CD4-positive, alpha-beta T cell (primary cell): ENCODE measurements at regions of chr5 and their contacts with region 1.

Region 1: GRCh38 chr5:41270423-41271251 is 57.3 kb upstream of the C6 start:
- DNase-seq: peak in 3 of 14 experiments; percentile 1 to 9 (median 3)
- ATAC-seq: no peak
- H3K4me3 ChIP-seq: no peak overlapping the region
- H3K4me3 Mint-ChIP-seq: no peak overlapping the region
- H3K27ac ChIP-seq: no peak overlapping the region
- H3K27ac Mint-ChIP-seq: no peak overlapping the region
- H3K4me1 ChIP-seq: no peaks in the 10 kb centered on the region
- H3K4me1 Mint-ChIP-seq: no peaks in the 10 kb centered on the region
- H3K27me3 ChIP-seq: no peaks in the 10 kb centered on the region
- H3K27me3 Mint-ChIP-seq: no peaks in the 10 kb centered on the region
- CTCF ChIP-seq: no peak

Region 2: GRCh38 chr5:41843456-41844370 is 573.1 kb after region 1 on chr5:
- CTCF ChIA-PET with region 1: no interaction called
- POLR2A ChIA-PET with region 1: no interaction called
- intact Hi-C with region 1: loop called in 1 of 2 experiments (anchors 10 kb)
- DNase-seq: peak in 4 of 14 experiments; percentile 33 to 62 (median 58)
- ATAC-seq: peak; percentile 67
- H3K4me3 ChIP-seq: no peak overlapping the region
- H3K4me3 Mint-ChIP-seq: no peak overlapping the region
- H3K27ac ChIP-seq: no peak overlapping the region
- H3K27ac Mint-ChIP-seq: no peak overlapping the region
- H3K4me1 ChIP-seq: no peaks in the 10 kb centered on the region
- H3K4me1 Mint-ChIP-seq: peaks cover 9% of the 10 kb centered on the region
- H3K27me3 ChIP-seq: no peaks in the 10 kb centered on the region
- H3K27me3 Mint-ChIP-seq: no peaks in the 10 kb centered on the region
- CTCF ChIP-seq: peak; percentile 70